Endothelial cell of umbilical vein (primary cell): ENCODE measurements at regions of chr10 and their contacts with region 1.

Region 1: DNA sequence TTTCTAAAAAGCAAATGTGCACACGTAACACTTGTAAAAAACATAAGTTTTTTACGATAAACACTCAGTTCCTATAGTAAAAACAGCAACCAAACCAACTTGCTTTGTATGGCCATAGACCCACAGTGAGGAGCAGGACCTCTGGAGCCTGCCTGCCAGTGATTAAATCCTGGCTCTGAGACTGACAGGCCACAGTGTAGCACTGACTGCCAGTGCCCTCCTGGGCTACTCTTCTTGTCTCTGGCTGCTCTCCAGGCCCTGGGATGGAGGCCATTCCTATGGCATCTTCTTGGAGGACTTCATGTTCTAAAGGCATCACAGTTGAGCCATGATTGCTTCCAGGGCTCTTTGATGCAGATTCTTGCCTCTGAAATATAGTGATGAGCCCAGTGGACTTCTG is 22.7 kb upstream of the TMEM254 start:
- DNase-seq: no peak
- H3K4me3 ChIP-seq: no peak overlapping the region
- H3K27ac ChIP-seq: no peak overlapping the region
- H3K4me1 ChIP-seq: no peaks in the 10 kb centered on the region
- H3K27me3 ChIP-seq: peaks cover 0 to under 1% of the 10 kb centered on the region in 2 experiments
- CTCF ChIP-seq: no peak
- POLR2A ChIP-seq: no peak

Region 2: DNA sequence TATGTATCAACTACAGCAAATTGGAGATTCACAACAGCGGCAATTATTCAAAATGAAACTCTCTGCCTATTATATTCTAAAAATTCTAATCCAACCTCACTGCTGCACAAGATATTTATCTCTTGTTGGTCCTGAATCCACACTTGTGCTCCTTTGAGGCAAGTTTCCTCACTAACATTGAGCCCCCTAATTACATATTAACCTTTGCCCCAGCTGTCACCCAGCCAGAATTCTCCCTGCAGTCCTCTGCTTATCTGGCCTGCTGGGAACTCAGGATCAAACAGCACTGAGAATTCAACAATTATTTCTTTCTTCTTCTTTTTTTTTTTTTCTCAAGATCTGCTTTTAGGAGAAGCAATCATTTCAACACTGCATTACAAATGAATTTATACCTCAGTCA is 55.2 kb after region 1 on chr10:
- CTCF ChIA-PET with region 1: no interaction called
- POLR2A ChIA-PET with region 1: no interaction called
- dilution Hi-C with region 1: no loop called
- intact Hi-C with region 1: no loop called
- DNase-seq: no peak
- H3K4me3 ChIP-seq: no peak overlapping the region
- H3K27ac ChIP-seq: no peak overlapping the region
- H3K4me1 ChIP-seq: no peaks in the 10 kb centered on the region
- H3K27me3 ChIP-seq: no peaks in the 10 kb centered on the region
- CTCF ChIP-seq: no peak
- POLR2A ChIP-seq: no peak

Region 3: GRCh38 chr10:80136081-80136571 is 80.4 kb after region 1 on chr10:
- CTCF ChIA-PET with region 1: interaction called, 8 read pairs
- POLR2A ChIA-PET with region 1: no interaction called
- dilution Hi-C with region 1: no loop called
- intact Hi-C with region 1: loop called (anchors 5 kb)
- DNase-seq: peak; percentile 83
- H3K4me3 ChIP-seq: no peak overlapping the region
- H3K27ac ChIP-seq: no peak overlapping the region
- H3K4me1 ChIP-seq: peaks cover 10% of the 10 kb centered on the region
- H3K27me3 ChIP-seq: peaks cover 0 to 2% of the 10 kb centered on the region in 2 experiments
- CTCF ChIP-seq: no peak
- POLR2A ChIP-seq: no peak